Common myeloid progenitor, CD34-positive (primary cell): ENCODE measurements at regions of chr12 and their contacts with region 1.

Region 1: DNA sequence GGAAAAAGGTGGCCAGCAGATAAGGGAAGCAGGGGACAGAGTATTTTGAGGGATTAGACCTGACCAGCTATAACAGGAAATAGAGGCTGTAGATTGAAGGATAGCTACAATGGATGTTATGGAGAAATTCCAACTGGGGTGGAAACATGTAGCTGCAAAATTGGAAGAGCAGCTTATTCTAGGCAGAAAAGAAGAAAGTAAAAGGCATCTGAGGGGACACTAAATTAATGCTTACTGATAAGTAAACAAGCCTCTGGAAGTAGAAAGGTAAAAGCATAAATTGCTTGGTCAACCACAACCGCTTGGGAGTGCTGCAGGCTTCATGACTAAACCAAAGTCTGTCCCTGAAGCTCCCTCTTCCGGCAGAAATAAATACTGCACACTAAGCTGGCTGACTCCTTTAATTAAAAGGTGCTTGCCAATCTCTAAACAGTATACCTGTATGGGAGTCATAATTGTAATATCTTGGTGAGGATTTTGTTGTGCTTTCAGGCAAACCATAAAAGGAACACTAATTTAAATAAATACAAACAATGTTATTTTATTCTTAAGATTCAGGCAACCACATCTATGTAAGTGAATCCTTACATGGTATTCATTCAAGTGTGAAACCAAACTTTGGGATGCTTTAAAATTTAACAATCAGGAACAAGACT is 7.7 kb downstream of the UBC start:
- DNase-seq: peak; percentile 93 to 97 (median 95)
- H3K4me3 ChIP-seq: no peak overlapping the region
- H3K27ac ChIP-seq: no peak overlapping the region
- H3K4me1 ChIP-seq: peaks cover 0 to 17% (median 8%) of the 10 kb centered on the region in 4 experiments
- H3K27me3 ChIP-seq: no peaks in the 10 kb centered on the region

Region 2: GRCh38 chr12:124869034-124869665 is 37.6 kb before region 1 on chr12:
- CTCF ChIA-PET with region 1: interaction called, 15 read pairs
- POLR2A ChIA-PET with region 1: no interaction called
- DNase-seq: peak; percentile 75 to 92 (median 91)
- H3K4me3 ChIP-seq: peak overlapping the region in 6 of 7 experiments; percentile 30 to 65 (median 59)
- H3K27ac ChIP-seq: peak overlapping the region in 1 of 2 experiments; percentile 67
- H3K4me1 ChIP-seq: peaks cover 4 to 61% (median 32%) of the 10 kb centered on the region in 4 experiments
- H3K27me3 ChIP-seq: no peaks in the 10 kb centered on the region

Region 3: DNA sequence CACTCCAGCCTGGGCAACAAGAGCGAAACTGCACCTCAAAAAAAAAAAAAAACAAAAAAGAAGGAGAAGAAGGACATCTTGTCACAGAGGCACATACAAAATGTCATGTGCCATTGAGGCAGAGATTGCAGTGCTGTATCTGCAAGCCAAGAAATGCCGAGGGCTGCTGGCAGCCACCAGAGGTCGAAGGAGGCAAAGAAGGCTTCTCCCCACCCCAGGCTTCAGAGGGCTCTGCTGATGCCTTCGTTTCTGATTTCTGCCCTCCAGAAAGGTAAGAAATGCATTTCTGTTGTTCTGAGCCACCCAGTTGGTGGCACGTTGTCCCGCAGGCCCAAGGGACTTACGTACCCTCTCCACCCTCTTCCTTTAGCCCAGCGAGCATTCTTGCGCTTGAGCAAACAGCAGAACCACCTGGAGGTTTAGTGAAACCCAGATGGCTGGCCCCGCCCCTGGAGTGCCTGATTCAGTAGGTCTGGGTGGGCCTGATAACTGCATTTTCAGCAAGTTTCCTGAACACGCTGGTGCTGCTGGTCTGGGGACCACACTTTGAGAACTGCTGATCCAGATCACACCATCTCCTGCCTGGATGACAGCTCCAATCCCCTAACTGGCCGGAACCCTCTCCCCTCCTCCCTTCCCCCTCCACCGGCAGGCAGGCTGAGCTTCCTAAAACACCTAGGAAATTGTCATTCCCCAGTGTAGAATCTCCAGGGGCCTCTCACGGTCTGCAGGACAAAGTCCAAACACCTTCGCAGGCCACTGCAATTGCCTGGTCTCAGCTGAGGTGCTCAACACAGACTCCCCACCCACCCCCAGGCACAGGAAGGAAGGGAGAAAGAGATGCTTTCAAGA is 21.9 kb before region 1 on chr12:
- CTCF ChIA-PET with region 1: interaction called, 16 read pairs
- POLR2A ChIA-PET with region 1: no interaction called
- DNase-seq: peak; percentile 65 to 88 (median 83)
- H3K4me3 ChIP-seq: peak overlapping the region in 3 of 7 experiments; percentile 43 to 59 (median 44)
- H3K27ac ChIP-seq: no peak overlapping the region
- H3K4me1 ChIP-seq: peaks cover 3 to 33% (median 27%) of the 10 kb centered on the region in 4 experiments
- H3K27me3 ChIP-seq: no peaks in the 10 kb centered on the region

Region 4: DNA sequence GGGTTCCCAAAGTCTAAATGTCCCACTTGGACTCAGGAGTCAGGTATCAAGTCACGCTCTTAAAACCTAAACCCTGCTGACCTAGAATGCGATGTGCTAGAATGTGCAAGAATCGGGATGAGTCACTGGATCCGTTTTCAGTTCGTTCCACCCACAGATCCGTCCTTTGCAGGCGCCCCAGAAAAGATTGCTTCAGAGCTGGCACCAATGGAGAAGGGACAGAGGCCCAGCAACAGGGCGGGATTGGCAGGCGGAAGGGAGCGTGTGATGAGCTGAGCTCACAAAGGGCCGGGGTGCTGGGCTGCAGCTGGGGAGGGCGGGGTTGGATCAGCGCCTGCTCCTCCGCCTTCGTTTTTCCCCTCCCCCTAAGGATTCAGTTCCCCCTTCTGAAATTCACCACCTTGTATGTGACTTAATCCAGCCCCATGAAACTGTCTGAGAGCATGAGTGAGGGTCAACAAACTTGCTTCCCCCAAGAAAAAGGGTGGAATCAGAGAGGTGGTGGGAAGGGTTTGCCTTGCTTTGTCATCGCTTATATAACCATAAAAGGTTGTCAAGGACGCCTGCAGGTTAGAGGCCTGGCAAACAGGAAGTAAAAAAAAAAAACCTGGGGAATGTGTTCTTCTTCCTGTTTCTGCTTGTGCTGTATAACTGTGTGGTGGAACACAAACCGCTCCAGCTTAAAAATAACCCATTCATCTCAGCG is 10.6 kb after region 1 on chr12:
- CTCF ChIA-PET with region 1: interaction called, 16 read pairs
- POLR2A ChIA-PET with region 1: interaction called, 3 read pairs
- DNase-seq: peak; percentile 99
- H3K4me3 ChIP-seq: peak overlapping the region; percentile 15 to 99 (median 62)
- H3K27ac ChIP-seq: peak overlapping the region; percentile 83 to 100
- H3K4me1 ChIP-seq: peaks cover 56 to 80% (median 71%) of the 10 kb centered on the region in 4 experiments
- H3K27me3 ChIP-seq: no peaks in the 10 kb centered on the region

Region 5: GRCh38 chr12:124927201-124928094 is 20.7 kb after region 1 on chr12:
- CTCF ChIA-PET with region 1: interaction called, 13 read pairs
- POLR2A ChIA-PET with region 1: interaction called, 4 read pairs
- DNase-seq: peak; percentile 90 to 94 (median 94)
- H3K4me3 ChIP-seq: peak overlapping the region; percentile 32 to 100 (median 94)
- H3K27ac ChIP-seq: peak overlapping the region; percentile 56 to 89
- H3K4me1 ChIP-seq: peaks cover 0 to 13% (median 6%) of the 10 kb centered on the region in 4 experiments
- H3K27me3 ChIP-seq: peaks cover 0 to 2% (median 0%) of the 10 kb centered on the region in 5 experiments

Region 6: DNA sequence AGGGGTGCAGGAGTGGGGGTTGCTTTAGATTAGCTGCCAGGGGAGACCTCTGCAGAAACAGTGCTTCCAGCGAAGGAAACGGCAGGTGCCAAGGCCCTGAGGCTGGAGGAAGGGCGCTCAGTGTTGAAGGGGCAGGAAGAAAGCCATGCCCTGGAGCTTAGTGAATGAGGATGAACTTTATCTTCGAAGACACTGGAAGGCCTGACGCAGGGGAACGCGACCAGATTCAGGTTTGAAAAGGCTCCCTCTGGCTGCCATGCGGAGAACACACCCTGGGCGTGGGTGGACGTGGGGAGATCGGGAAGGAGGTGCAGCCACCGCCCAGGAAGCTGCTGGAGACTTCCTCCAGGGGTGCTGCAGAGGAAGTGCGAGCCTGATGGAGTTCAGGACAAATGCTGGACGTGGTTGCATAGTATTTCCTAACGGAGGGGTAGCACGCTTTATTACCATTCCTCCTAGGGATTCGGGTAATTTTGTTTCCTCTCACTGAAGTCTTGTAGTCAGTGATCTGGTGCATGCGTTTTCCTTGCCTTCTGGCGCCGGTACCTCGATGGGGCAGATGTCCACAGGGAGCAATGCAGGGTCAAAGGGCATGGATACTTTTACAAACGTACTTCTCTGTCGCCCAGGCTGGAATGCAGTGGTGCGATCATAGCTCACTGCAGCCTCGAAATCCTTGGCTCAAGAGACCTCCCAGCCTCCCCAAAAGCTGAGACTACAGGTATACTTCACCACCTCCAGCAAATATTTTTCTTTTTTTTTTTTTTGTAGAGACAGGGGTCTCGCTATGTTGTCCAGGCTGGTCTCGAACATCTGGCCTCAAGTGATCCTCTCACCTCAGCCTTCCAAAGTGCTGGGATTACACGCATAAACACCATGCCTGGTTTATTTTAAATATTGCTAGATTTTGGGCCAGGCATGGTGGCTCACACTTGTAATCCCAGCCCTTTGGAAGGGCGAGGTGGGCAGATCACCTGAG is 34.1 kb after region 1 on chr12:
- CTCF ChIA-PET with region 1: interaction called, 128 read pairs
- POLR2A ChIA-PET with region 1: interaction called, 9 read pairs
- DNase-seq: peak; percentile 83 to 86 (median 85)
- H3K4me3 ChIP-seq: peak overlapping the region in 6 of 7 experiments; percentile 77 to 95 (median 92)
- H3K27ac ChIP-seq: peak overlapping the region in 1 of 2 experiments; percentile 89
- H3K4me1 ChIP-seq: peaks cover 16 to 40% (median 29%) of the 10 kb centered on the region in 4 experiments
- H3K27me3 ChIP-seq: no peaks in the 10 kb centered on the region

Region 7: DNA sequence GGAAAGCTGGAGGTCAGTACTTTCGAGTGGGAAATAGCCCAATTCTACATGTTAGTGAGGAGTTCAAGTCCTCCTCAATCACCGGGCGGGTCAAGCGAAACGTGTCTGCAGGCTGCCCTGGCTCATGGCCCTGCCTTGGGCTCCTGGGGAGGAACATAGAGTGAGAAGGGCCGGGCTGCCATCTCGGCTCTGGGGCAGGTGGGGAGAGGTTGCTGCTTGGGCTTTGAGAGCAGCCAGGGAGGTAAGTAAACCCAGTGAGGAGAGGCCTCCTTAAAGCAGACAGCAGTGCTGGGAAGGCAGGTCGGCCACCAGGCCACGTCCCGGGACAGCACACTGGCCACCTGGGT is 39.7 kb after region 1 on chr12:
- CTCF ChIA-PET with region 1: interaction called, 128 read pairs
- POLR2A ChIA-PET with region 1: no interaction called
- DNase-seq: no peak
- H3K4me3 ChIP-seq: no peak overlapping the region
- H3K27ac ChIP-seq: no peak overlapping the region
- H3K4me1 ChIP-seq: no peaks in the 10 kb centered on the region
- H3K27me3 ChIP-seq: no peaks in the 10 kb centered on the region

Region 8: GRCh38 chr12:125029761-125030358 is 123.1 kb after region 1 on chr12:
- CTCF ChIA-PET with region 1: no interaction called
- POLR2A ChIA-PET with region 1: no interaction called
- DNase-seq: no peak
- H3K4me3 ChIP-seq: no peak overlapping the region
- H3K27ac ChIP-seq: no peak overlapping the region
- H3K4me1 ChIP-seq: no peaks in the 10 kb centered on the region
- H3K27me3 ChIP-seq: no peaks in the 10 kb centered on the region